ENCODE measurements at regions of chr2 and their contacts with region 1.

Region 1: GRCh38 chr2:232521959-232522622 is 1.9 kb downstream of the PRSS56 start:
- DNase-seq: peak; percentile 71
- H3K4me3 Mint-ChIP-seq: no peak overlapping the region
- H3K27ac Mint-ChIP-seq: no peak overlapping the region
- H3K4me1 Mint-ChIP-seq: peaks cover 10% of the 10 kb centered on the region
- H3K27me3 Mint-ChIP-seq: peaks cover 81% of the 10 kb centered on the region

Region 2: DNA sequence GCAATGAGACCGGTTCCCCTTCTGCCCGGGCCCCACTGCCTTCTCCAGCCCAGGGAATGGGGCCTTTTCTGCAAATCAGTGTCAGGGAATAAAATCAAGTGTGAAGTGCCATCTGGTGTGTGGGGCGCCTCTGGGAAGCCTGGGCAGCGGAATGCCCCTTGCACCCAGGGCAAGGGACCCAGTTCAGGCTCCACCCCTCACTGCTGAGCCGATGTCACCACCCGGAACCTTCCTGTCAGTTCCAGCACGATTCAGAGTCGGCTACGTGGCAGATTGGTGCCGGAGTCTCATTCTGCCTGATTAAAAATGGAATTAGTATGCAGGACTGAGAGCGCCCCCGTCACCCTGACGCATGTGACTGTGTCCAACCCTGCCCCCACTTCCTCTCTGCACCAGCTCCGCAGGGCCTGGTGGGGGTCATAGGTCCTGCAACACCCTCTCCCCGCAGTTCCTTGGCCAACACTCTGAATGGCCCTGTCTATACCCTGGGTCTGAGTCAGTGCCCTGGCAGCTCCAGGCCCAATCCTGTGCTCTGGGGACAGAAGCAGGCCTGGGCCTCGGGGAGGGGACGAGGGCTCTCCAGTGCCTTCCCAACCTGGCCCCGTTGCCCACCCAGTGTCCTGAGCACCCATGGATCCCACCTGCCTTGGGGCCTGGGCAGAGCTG is 74.3 kb before region 1 on chr2:
- CTCF ChIA-PET with region 1: interaction called, 14 read pairs
- DNase-seq: no peak
- H3K4me3 Mint-ChIP-seq: no peak overlapping the region
- H3K27ac Mint-ChIP-seq: no peak overlapping the region
- H3K4me1 Mint-ChIP-seq: peaks cover 3% of the 10 kb centered on the region
- H3K27me3 Mint-ChIP-seq: peaks cover 19% of the 10 kb centered on the region

Measured in activated naive CD4-positive, alpha-beta T cell treated with anti-CD3 and anti-CD28 coated beads, Interleukin-2, amount 10 ng/mL, durations not matched to agents 7 days and 5 days (primary cell).